Activated T-helper 1 cell treated with anti-CD3 and anti-CD28 coated beads, Interleukin-12 subunit alpha, Interleukin-12 subunit beta, Interleukin-2, Interleukin-4 antibody, amounts not matched to agents 30 ng/mL and 10 ng/mL and 1 ng/mL, durations not matched to agents 14 hours and 24 hours and 36 hours (primary cell): ENCODE measurements at regions of chr10 and their contacts with region 1.

Region 1: DNA sequence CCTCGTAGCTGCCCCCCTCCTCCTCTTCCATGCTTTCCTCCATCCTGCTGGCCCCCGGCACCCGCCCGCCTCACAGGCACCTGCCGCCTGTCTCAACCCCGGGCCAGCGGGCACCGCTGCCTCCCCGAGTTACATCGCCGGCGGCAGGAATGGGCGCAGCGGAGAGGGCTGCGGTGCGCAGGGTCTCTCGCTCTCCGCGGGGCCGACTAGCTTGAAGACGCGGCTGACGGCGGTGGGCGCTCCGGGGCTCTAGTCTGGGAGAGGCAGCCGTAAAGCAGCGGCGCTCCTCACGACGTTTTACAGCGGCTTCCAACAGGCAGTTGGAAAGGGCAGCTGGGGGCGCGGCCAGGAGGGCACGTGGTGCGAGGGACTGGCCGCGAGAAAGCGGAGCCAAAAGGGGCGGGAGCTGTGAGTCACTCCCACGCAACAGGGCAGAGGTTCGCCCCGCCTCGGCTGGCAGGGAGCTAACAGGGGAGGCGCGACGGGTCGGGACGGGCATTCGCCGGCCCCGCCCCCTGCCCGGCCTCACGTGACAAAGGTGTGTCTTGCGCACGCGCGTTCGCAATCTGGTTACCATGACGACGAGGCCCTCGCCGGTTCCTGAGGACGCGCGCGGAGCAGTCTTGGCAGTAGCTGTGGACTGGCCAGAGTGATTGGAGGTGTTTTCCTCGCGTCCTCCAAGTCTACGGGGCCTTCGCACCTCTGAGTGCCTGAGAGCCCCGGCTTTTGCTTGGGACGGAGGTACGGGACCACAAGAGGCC is at the start of gene CACUL1:
- DNase-seq: peak; percentile 100
- H3K4me3 Mint-ChIP-seq: peak within 1 kb of the TSS; percentile 87
- H3K27ac Mint-ChIP-seq: peak within 1 kb of the TSS; percentile 86
- H3K4me1 Mint-ChIP-seq: peaks cover 26% of the 10 kb centered on the region
- H3K27me3 Mint-ChIP-seq: peaks cover 15% of the 10 kb centered on the region
- total RNA-seq, gene CACUL1: 30.1 and 32.7 TPM in 2 replicates

Region 2: DNA sequence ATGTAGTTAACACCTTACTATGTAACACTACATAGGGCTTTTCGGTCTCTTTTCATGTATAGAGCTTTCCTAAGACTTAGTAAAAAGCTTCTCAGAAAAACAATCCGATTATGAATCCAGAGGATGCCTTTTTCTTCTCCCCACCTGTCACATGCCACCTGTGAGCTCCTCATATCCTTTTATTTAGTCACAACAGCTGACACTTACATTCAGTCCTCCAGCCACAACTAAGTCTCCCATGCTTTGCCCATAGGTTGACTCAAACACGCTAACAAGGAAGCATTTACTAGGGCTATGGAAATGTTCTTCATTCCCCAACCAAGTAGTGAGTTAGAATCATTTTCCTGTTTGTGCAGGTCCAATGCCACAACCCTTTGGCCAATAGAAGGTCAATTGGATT is 1897.7 kb before region 1 on chr10:
- intact Hi-C with region 1: no loop called
- DNase-seq: no peak
- H3K4me3 Mint-ChIP-seq: no peak overlapping the region
- H3K27ac Mint-ChIP-seq: no peak overlapping the region
- H3K4me1 Mint-ChIP-seq: no peaks in the 10 kb centered on the region
- H3K27me3 Mint-ChIP-seq: peaks cover 2% of the 10 kb centered on the region

Region 3: GRCh38 chr10:117375360-117376178 is 1379.3 kb before region 1 on chr10 and contains the start of gene PDZD8:
- intact Hi-C with region 1: loop called (anchors 1 kb)
- DNase-seq: peak; percentile 87
- H3K4me3 Mint-ChIP-seq: peak within 1 kb of the TSS; percentile 94
- H3K27ac Mint-ChIP-seq: peak within 1 kb of the TSS; percentile 81
- H3K4me1 Mint-ChIP-seq: peaks cover 24% of the 10 kb centered on the region
- H3K27me3 Mint-ChIP-seq: peaks cover 33% of the 10 kb centered on the region
- total RNA-seq, gene PDZD8: 20.2 and 24.5 TPM in 2 replicates

Region 4: DNA sequence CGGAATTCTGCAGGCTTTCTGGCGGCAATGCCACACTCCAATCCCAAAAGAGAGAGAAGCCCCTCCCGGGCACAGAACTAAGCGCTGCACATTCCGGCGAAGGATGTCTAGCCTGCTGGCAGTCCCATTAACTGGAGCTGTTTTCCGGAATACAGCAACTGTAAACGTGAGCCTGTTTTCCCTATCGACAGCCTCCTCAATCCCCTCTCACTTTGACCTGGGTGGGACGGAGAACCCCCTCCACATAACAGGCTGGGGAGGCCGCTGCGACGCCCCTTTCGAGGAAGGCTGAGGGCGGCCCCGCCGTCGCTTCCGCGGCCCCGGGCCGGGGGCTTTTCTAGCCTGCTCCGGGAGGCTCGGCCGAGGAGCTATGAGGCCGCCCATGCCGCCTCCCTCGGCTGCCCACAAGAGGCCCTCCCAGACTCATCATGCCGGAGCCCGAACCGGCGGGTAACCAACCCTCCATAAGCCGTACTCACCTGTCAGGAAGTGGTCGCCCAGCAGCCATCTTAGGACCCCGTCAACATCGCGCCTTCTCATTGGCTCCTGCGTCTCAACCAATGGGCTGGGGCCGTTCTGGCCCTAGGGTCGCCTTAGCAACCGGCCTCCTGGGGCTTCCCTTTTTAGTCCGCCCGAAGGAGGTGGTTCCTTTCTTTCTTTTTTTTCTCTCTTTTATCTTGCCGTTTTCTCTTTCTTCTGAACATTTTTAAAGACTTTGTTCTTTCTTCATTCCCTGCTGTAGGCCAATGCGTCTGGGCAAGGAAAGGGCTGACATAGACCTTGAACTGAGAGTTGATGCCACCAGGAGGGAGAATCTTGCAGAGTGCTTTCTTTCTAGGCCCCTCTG is 412.9 kb before region 1 on chr10 and contains the start of gene FAM204A:
- intact Hi-C with region 1: loop called (anchors 1 kb)
- DNase-seq: peak; percentile 94
- H3K4me3 Mint-ChIP-seq: peak within 1 kb of the TSS; percentile 92
- H3K27ac Mint-ChIP-seq: peak within 1 kb of the TSS; percentile 92
- H3K4me1 Mint-ChIP-seq: peaks cover 32% of the 10 kb centered on the region
- H3K27me3 Mint-ChIP-seq: peaks cover 6% of the 10 kb centered on the region
- total RNA-seq, gene FAM204A: 61.8 and 63.3 TPM in 2 replicates

Region 5: GRCh38 chr10:119030421-119031250 is 275.7 kb after region 1 on chr10:
- intact Hi-C with region 1: loop called (anchors 10 kb)
- DNase-seq: peak; percentile 39
- H3K4me3 Mint-ChIP-seq: peak overlapping the region; percentile 73
- H3K27ac Mint-ChIP-seq: peak overlapping the region; percentile 40
- H3K4me1 Mint-ChIP-seq: peaks cover 25% of the 10 kb centered on the region
- H3K27me3 Mint-ChIP-seq: peaks cover 7% of the 10 kb centered on the region

Region 6: DNA sequence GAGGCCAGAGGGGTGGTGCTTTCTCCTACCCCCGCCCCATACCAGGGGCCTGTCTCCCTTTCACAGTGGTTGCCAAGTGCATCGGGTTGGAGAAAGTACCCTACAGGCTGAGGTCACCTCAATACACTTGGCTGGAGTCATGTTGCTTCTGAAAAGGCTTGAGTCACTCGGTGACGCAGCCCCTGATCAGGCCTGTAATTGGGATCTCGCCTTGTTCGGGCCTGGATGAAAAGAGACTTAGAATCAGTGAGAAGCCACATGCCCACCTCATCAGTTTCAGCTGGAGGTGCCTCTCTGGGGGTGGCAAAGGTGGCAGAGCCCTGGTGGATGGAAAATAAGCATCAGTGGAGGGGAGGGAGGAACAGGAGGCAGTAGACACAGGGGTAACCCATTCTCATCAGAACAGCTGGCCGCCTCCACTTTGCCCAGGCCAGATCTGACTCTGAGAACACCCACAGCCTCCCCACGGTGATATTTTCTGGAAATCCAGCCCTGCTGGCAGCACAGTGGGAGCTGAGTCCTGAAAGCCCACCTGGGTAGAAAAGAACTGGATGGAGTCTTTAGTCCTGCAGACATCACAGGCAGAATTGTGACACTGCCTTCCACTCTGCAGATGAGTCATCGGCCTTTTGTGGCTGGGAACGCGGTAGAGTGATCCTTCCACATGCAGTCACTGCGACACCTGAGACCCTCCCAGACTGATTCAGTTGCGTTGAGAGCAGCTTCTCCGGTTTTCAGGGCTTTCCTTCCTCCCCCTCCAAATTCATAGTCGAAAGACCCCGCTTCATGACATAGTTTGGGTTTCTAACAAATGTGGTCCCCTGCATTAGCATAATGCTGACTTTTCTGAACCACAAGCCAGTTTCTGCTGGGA is 560.5 kb after region 1 on chr10:
- intact Hi-C with region 1: loop called (anchors 10 kb)
- DNase-seq: peak; percentile 64
- H3K4me3 Mint-ChIP-seq: peak overlapping the region; percentile 62
- H3K27ac Mint-ChIP-seq: peak overlapping the region; percentile 95
- H3K4me1 Mint-ChIP-seq: peaks cover 64% of the 10 kb centered on the region
- H3K27me3 Mint-ChIP-seq: peaks cover 12% of the 10 kb centered on the region

Region 7: GRCh38 chr10:119725828-119726675 is 971.2 kb after region 1 on chr10 and contains the start of gene INPP5F:
- intact Hi-C with region 1: loop called (anchors 2 kb)
- DNase-seq: peak; percentile 98
- H3K4me3 Mint-ChIP-seq: peak within 1 kb of the TSS; percentile 93
- H3K27ac Mint-ChIP-seq: peak within 1 kb of the TSS; percentile 81
- H3K4me1 Mint-ChIP-seq: peaks cover 39% of the 10 kb centered on the region
- H3K27me3 Mint-ChIP-seq: no peaks in the 10 kb centered on the region
- total RNA-seq, gene INPP5F: 17.7 and 19.4 TPM in 2 replicates